Naive thymus-derived CD4-positive, alpha-beta T cell (primary cell): ENCODE measurements at regions of chr3 and their contacts with region 1.

Region 1: DNA sequence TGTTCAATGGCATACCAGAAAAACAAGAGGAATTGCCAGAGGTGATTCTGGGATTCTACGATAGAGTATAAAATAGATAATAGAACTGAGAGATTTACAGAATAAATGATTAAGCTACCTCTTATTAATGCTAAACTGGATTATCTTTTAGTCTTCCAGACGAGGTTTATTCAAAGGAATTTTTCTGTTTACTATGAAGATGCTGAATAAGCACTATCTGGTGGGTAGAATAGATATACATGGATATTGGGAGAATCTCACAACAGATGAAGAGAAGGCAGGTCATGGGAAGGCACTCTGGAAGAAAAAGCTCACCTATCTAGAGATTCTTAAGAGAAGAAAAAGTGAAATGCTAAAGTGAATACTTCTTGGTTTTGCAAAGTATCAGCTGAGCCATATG is 11.2 kb downstream of the CIP2A start:
- DNase-seq: no peak
- ATAC-seq: no peak
- H3K4me3 ChIP-seq: no peak overlapping the region
- H3K4me3 Mint-ChIP-seq: no peak overlapping the region
- H3K27ac ChIP-seq: no peak overlapping the region
- H3K27ac Mint-ChIP-seq: no peak overlapping the region
- H3K4me1 ChIP-seq: no peaks in the 10 kb centered on the region
- H3K4me1 Mint-ChIP-seq: peaks cover 0 to 2% (median 0%) of the 10 kb centered on the region in 7 donors
- H3K27me3 ChIP-seq: no peaks in the 10 kb centered on the region
- H3K27me3 Mint-ChIP-seq: no peaks in the 10 kb centered on the region

Region 2: GRCh38 chr3:108461661-108462111 is 116.4 kb before region 1 on chr3:
- CTCF ChIA-PET with region 1: no interaction called
- POLR2A ChIA-PET with region 1: no interaction called
- intact Hi-C with region 1: no loop called
- DNase-seq: no peak
- ATAC-seq: no peak
- H3K4me3 ChIP-seq: no peak overlapping the region
- H3K4me3 Mint-ChIP-seq: no peak overlapping the region
- H3K27ac ChIP-seq: no peak overlapping the region
- H3K27ac Mint-ChIP-seq: no peak overlapping the region
- H3K4me1 ChIP-seq: no peaks in the 10 kb centered on the region
- H3K4me1 Mint-ChIP-seq: no peaks in the 10 kb centered on the region
- H3K27me3 ChIP-seq: no peaks in the 10 kb centered on the region
- H3K27me3 Mint-ChIP-seq: peaks cover 0 to 11% (median 2%) of the 10 kb centered on the region in 5 donors

Region 3: DNA sequence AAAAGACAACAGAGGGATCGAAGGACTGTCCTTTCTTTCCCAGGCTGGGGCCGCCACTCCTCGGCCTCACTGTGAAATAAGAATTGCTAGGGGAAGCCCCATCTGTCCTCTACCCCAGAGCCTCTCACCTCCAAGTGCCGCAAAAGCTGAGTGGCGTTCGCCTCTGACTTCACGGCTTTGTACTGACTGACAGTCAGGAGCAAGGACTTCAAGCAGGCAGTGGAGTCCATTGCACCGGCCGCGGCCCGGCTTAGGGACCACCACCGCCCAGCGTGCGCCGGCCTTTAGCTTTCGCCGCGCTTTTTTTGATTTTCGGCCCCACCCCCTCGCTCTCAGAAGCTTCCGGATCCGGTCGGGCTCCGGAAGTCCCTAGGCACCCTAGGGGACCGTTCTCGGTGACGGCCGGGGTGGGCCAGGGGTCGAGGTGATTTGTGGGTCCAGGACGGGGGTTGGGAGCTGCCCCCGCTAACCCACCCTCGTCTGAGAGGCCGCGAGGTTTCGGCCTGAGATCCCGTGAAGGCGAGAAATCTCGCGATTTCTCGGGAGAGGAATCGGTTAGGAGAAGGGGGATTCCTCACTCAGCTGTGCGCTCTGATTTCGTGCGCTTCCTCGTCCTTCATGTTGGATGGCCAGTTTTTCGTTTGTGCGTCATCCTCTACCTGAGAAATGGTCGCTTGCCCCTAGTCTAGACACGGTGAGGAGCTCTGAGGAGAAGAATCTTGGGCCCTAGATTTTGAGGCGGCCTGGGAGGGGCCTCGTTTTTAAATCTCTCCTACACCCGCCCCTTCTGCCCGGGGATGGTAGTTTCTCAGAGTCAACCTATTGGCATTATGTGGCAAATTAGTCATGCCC is 11.3 kb after region 1 on chr3 and contains the starts of genes CIP2A and DZIP3:
- CTCF ChIA-PET with region 1: no interaction called
- POLR2A ChIA-PET with region 1: interaction called, 7 read pairs
- intact Hi-C with region 1: loop called in 1 of 2 experiments (anchors 1 kb)
- DNase-seq: peak; percentile 74 to 88 (median 82)
- ATAC-seq: peak; percentile 83
- H3K4me3 ChIP-seq: peak within 1 kb of the TSS; percentile 87
- H3K4me3 Mint-ChIP-seq: peak within 1 kb of the TSS; percentile 94 to 99 (median 98)
- H3K27ac ChIP-seq: peak within 1 kb of the TSS; percentile 92
- H3K27ac Mint-ChIP-seq: peak within 1 kb of the TSS; percentile 95 to 100 (median 99)
- H3K4me1 ChIP-seq: peaks cover 11 to 15% of the 10 kb centered on the region in 2 donors
- H3K4me1 Mint-ChIP-seq: peaks cover 12 to 53% (median 39%) of the 10 kb centered on the region in 7 donors
- H3K27me3 ChIP-seq: no peaks in the 10 kb centered on the region
- H3K27me3 Mint-ChIP-seq: no peaks in the 10 kb centered on the region
- total RNA-seq, gene CIP2A: 3.4 to 44.2 (median 4.1) TPM
- total RNA-seq, gene DZIP3: 9.6 to 17.3 (median 14.6) TPM